Endothelial cell of umbilical vein (primary cell): ENCODE measurements at regions of chr1 and their contacts with region 1.

Region 1: GRCh38 chr1:173429471-173430402 is 47.4 kb upstream of the PRDX6 start:
- DNase-seq: peak; percentile 75
- H3K4me3 ChIP-seq: no peak overlapping the region
- H3K27ac ChIP-seq: peak overlapping the region; percentile 64
- H3K4me1 ChIP-seq: peaks cover 12% of the 10 kb centered on the region
- H3K27me3 ChIP-seq: no peaks in the 10 kb centered on the region
- CTCF ChIP-seq: peak; percentile 56 to 65
- POLR2A ChIP-seq: no peak

Region 2: GRCh38 chr1:173914366-173914871 is 484.7 kb after region 1 on chr1:
- CTCF ChIA-PET with region 1: no interaction called
- POLR2A ChIA-PET with region 1: no interaction called
- dilution Hi-C with region 1: no loop called
- intact Hi-C with region 1: loop called (anchors 2 kb)
- DNase-seq: peak; percentile 39
- H3K4me3 ChIP-seq: no peak overlapping the region
- H3K27ac ChIP-seq: no peak overlapping the region
- H3K4me1 ChIP-seq: no peaks in the 10 kb centered on the region
- H3K27me3 ChIP-seq: no peaks in the 10 kb centered on the region
- CTCF ChIP-seq: peak; percentile 71 to 72
- POLR2A ChIP-seq: no peak

Region 3: DNA sequence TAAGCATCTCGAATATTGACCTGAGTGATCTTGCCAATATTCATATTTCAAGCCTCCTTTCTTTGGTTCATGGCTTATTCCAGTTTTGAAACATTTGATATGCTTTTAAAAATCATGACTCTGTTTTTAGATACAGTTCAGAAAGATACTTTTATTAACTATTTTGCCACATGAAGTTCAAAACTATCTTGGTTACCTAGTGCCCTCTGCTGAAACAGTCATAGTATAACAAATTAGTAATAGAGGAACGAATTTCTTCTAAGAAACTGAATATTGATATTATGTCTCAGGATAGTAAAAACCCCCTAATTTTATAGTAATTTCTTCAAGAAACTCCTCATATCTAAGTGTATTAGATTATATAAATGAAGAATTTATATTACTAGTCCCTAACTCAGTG is 645.0 kb after region 1 on chr1:
- CTCF ChIA-PET with region 1: no interaction called
- POLR2A ChIA-PET with region 1: interaction called, 7 read pairs
- dilution Hi-C with region 1: no loop called
- intact Hi-C with region 1: loop called (anchors 2 kb)
- DNase-seq: peak; percentile 33
- H3K4me3 ChIP-seq: no peak overlapping the region
- H3K27ac ChIP-seq: no peak overlapping the region
- H3K4me1 ChIP-seq: no peaks in the 10 kb centered on the region
- H3K27me3 ChIP-seq: peaks cover 2 to 3% of the 10 kb centered on the region in 2 experiments
- CTCF ChIP-seq: peak; percentile 2 to 10
- POLR2A ChIP-seq: no peak